ENCODE measurements at regions of chr1 and their contacts with region 1.

Region 1: GRCh38 chr1:171141688-171142415 is 43.2 kb upstream of the FMO2 start:
- DNase-seq: peak; percentile 53 to 72 (median 62)
- H3K4me3 ChIP-seq: no peak overlapping the region
- H3K27ac ChIP-seq: peak overlapping the region; percentile 36 to 51
- H3K4me1 ChIP-seq: peaks cover 7% of the 10 kb centered on the region
- H3K27me3 ChIP-seq: no peaks in the 10 kb centered on the region
- CTCF ChIP-seq: peak in 1 of 3 donors; percentile 28
- EP300 ChIP-seq: peak; percentile 76
- POLR2A ChIP-seq: no peak

Region 2: DNA sequence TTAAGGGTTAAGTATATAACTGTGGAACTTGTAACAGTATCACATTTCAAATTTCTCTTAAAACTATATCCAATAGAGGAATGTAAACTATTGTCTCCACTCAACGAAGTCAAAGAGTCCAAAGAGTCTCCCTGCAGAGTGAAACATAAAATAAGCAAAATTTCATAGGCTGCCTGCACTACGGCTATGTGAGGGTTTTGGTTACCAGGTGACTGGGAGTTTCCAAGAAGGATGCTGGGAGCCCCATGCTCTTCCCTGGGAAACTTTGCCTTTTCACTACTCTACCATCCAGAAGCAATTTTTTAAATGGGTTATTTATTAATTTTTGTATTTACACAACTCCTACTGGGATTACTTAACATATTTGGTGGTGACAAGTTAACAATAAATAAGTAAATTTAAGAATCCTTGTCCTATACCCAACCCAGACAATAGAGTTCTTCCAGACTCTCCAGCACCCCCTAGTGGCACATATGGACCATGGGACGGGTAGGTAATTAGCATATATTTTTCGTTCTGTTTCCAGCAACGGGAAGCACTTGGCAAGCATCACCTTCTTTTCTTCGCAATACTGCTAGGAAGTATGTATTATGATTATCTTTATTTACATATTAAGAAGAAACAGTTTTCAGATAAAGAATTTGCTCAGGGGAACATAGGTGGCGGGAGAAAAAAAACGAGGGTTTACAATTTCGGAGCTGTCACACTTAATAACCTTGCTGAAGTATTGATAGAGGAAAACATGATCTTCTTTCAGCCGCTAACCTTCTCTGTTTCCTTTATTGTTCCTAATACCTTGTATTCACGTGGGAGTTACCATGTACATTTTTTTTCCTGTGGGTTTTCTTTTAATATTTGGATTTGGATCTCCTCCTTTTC is 46.8 kb after region 1 on chr1:
- intact Hi-C with region 1: loop called in 1 of 4 experiments (anchors 5 kb)
- DNase-seq: peak; percentile 22 to 65 (median 51)
- H3K4me3 ChIP-seq: no peak overlapping the region
- H3K27ac ChIP-seq: no peak overlapping the region
- H3K4me1 ChIP-seq: peaks cover 2% of the 10 kb centered on the region
- H3K27me3 ChIP-seq: no peaks in the 10 kb centered on the region
- CTCF ChIP-seq: peak in 2 of 3 donors; percentile 45 to 55
- EP300 ChIP-seq: no peak
- POLR2A ChIP-seq: no peak

Region 3: DNA sequence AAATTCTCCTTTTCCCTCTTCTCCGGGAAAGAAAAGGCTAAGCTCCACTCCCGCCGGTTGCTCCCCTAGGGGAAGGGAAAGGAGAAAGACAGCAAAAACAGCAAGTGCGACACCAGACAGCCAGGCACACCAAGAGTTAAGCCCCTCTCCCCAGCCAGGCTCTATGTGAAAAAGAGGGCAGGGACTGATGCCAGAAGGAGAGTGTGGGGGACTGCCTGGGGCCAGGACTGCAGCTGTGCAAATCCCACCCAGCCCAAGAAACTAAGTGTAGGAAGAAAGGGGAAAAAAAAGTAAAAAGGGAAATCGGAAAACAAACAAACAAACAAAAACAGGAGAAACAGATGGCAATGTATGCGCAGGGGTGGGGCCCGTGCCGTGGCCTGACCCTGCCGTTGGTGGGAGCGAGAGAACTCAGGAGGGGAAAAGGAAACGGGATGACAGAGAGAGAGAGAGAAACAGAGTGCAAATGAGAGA is 78.8 kb after region 1 on chr1:
- intact Hi-C with region 1: loop called in 1 of 4 experiments (anchors 10 kb)
- DNase-seq: peak; percentile 21 to 49 (median 26)
- H3K4me3 ChIP-seq: peak overlapping the region; percentile 5
- H3K27ac ChIP-seq: peak overlapping the region; percentile 51 to 68
- H3K4me1 ChIP-seq: peaks cover 11% of the 10 kb centered on the region
- H3K27me3 ChIP-seq: no peaks in the 10 kb centered on the region
- CTCF ChIP-seq: no peak
- EP300 ChIP-seq: no peak
- POLR2A ChIP-seq: no peak